Dendritic cell treated with granulocyte-macrophage colony-stimulating factor and Interleukin-4, amounts not matched to agents 40 ng/mL and 50 ng/mL, for 4 days (primary cell): ENCODE measurements at regions of chr1 and their contacts with region 1.

Region 1: DNA sequence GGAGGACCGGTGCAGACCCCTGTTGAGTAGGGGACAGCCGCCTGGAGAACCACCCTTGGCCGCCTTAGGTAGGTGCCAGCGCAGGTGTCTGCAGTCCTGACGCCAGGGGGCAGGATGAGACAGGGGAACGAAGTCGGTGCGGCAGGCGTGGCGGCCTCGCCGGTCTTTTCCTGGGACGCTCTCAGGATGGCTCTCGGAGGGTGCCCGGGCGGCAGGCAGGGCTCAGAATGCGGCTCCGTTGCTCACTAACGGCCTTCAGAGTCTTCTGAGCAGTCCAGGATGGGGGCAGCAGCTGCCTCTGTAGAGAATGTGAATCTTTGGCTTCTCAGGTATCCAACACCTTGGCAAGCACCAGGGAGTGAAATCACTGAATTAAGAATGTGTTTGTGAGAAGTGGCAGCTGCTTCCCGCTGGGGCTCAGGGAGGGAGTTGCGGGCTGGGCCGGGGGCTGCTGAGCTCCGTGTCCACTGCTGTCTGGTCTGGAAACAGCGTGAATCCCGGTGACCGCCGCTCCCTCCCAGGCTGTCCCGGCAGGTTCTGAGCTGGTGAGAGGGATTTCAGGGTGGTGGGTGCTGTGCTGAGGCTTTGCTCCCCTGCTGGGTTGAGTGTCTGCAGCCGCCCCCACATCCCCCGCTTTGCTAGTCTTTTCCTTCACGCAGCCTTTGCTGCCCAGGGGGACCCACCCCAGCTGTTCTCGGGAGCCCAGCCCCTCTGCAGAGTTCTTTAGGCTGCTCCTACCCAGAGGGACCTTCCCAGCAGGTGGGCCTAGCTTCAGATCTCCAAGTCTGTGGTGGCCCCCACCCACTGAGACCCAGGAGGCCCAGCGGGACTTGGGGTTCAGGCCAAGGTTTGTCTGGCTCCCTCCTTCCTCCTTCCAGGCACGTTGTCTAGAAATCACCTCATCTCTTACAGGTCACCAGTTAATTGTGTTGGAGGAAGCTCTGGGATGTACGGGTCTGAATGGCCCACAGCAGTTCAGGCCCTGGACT is 11.1 kb upstream of the C1orf174 start:
- H3K4me3 Mint-ChIP-seq: no peak overlapping the region
- H3K27ac Mint-ChIP-seq: no peak overlapping the region
- H3K4me1 Mint-ChIP-seq: peaks cover 14% of the 10 kb centered on the region
- H3K27me3 Mint-ChIP-seq: peaks cover 26% of the 10 kb centered on the region

Region 2: GRCh38 chr1:5745776-5746610 is 1834.8 kb after region 1 on chr1:
- intact Hi-C with region 1: loop called (anchors 5 kb)
- H3K4me3 Mint-ChIP-seq: no peak overlapping the region
- H3K27ac Mint-ChIP-seq: no peak overlapping the region
- H3K4me1 Mint-ChIP-seq: no peaks in the 10 kb centered on the region
- H3K27me3 Mint-ChIP-seq: peaks cover 6% of the 10 kb centered on the region